Common myeloid progenitor, CD34-positive (primary cell): ENCODE measurements at regions of chr16 and their contacts with region 1.

Region 1: GRCh38 chr16:87778830-87779579 is 13.2 kb upstream of the KLHDC4 start:
- DNase-seq: peak; percentile 99 to 100 (median 99)
- H3K4me3 ChIP-seq: peak overlapping the region in 2 of 7 experiments; percentile 18 to 19
- H3K27ac ChIP-seq: peak overlapping the region; percentile 59 to 89
- H3K4me1 ChIP-seq: peaks cover 0 to 46% (median 32%) of the 10 kb centered on the region in 4 experiments
- H3K27me3 ChIP-seq: no peaks in the 10 kb centered on the region

Region 2: DNA sequence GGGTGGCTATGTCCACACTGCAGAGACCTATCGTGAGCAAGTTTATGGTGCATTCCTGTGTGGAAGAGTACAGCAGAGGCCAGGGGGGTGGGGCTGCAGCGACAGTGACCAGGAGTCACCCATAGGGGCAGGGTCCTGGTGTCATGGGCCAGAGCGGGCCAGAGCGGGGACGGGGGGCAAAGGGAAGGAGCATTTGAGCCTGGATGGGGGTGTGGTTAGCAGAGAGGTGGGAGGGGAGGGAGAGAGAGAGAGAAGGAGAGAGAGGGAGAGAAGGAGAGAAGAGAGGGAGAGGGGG is 158.9 kb before region 1 on chr16:
- CTCF ChIA-PET with region 1: no interaction called
- POLR2A ChIA-PET with region 1: no interaction called
- DNase-seq: no peak
- H3K4me3 ChIP-seq: no peak overlapping the region
- H3K27ac ChIP-seq: no peak overlapping the region
- H3K4me1 ChIP-seq: peaks cover 0 to 3% (median 0%) of the 10 kb centered on the region in 4 experiments
- H3K27me3 ChIP-seq: peaks cover 0 to 39% (median 3%) of the 10 kb centered on the region in 5 experiments

Region 3: GRCh38 chr16:87747626-87748414 is 31.2 kb before region 1 on chr16:
- CTCF ChIA-PET with region 1: no interaction called
- POLR2A ChIA-PET with region 1: no interaction called
- DNase-seq: no peak
- H3K4me3 ChIP-seq: no peak overlapping the region
- H3K27ac ChIP-seq: no peak overlapping the region
- H3K4me1 ChIP-seq: no peaks in the 10 kb centered on the region
- H3K27me3 ChIP-seq: no peaks in the 10 kb centered on the region

Region 4: DNA sequence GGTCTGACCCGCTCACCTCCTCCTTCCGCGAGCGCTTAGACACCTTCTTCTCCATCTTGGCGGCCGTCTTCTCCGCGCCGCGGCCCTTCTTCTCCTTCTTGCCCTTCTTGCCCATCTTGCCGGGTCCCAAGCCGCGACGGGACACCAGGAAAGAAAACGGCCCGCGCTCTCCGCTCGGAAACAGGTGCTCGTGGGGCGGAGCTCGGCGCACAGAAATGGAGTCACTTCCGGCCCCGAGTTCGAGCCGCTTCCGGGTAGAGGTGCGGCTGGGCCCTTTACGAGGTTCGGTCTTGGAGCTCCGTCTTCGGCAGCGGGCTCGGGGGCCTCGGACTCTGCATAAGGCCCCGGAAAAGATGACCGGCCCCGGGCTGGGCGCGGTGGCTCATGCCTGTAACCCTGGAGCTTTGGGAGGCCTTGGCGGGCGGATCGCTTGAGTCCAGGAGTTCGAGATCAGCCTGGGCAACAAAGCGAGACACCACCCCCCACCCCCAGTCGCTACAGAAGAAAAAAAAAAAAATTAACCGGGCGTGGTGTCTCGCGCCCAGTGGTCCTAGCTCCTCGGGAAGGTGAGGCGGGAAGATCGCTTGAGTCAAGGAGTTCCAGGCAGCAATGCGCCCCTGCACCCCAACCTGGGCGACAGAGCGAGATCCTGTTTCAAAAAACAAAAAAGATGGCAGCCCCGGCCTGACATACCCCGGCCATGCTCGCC is 13.1 kb before region 1 on chr16 and contains the start of gene KLHDC4:
- CTCF ChIA-PET with region 1: interaction called, 13 read pairs
- POLR2A ChIA-PET with region 1: no interaction called
- DNase-seq: peak; percentile 89 to 93 (median 93)
- H3K4me3 ChIP-seq: peak within 1 kb of the TSS; percentile 81 to 99 (median 93)
- H3K27ac ChIP-seq: peak within 1 kb of the TSS; percentile 74 to 94
- H3K4me1 ChIP-seq: peaks cover 4 to 21% (median 15%) of the 10 kb centered on the region in 4 experiments
- H3K27me3 ChIP-seq: no peaks in the 10 kb centered on the region

Region 5: DNA sequence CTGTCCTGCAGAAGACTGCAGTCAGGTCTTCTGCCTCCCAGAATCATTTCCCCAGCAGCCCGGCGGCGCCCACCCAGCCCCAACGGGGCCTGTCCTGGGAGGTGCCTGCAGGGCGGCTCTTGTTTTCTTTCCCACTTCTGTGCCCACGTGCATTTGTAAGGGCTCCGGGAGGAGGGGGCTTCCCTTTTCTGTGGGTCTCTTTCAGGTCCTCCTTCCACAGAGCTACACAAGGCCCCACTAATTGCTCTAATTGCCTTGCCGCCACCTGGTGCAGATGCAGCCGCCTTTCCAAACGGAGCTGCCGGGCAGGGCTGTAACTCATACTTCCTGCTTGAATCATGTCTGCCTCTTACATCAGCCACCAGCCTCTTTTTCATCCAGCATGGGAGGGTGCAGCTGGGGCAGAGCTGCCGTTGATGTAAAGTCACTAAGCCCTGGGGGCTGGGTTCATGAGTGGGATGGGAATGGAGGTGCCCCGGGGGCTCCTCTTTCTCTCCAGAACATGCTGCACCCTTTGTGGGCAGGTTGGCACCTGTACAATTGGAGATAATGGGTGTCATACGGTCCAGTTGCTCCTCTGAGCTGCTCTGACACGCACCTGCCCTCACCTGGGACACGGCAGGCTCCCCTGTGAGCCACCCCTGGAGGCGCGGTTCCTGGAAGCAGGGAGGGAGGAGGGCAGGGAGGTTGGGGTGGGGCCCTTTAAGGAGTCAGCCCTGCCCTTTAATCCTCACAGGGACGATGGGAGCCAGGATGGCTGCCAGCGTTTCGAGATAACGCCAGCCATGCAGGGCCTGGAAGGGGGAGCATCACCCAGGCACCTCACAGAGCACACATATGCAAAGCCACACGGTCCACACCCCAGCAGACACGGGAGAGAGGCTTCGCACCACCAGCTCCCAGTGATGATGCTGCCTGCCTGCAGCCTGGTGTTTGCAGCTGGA is 27.9 kb after region 1 on chr16:
- CTCF ChIA-PET with region 1: interaction called, 24 read pairs
- POLR2A ChIA-PET with region 1: interaction called, 9 read pairs
- DNase-seq: peak; percentile 66 to 90 (median 83)
- H3K4me3 ChIP-seq: peak overlapping the region in 2 of 7 experiments; percentile 2 to 15
- H3K27ac ChIP-seq: peak overlapping the region in 1 of 2 experiments; percentile 17
- H3K4me1 ChIP-seq: peaks cover 5 to 59% (median 30%) of the 10 kb centered on the region in 4 experiments
- H3K27me3 ChIP-seq: no peaks in the 10 kb centered on the region

Region 6: GRCh38 chr16:87853411-87854052 is 74.5 kb after region 1 on chr16:
- CTCF ChIA-PET with region 1: interaction called, 63 read pairs
- POLR2A ChIA-PET with region 1: interaction called, 11 read pairs
- DNase-seq: peak; percentile 86 to 95 (median 93)
- H3K4me3 ChIP-seq: peak overlapping the region in 5 of 7 experiments; percentile 21 to 65 (median 54)
- H3K27ac ChIP-seq: peak overlapping the region; percentile 50 to 82
- H3K4me1 ChIP-seq: peaks cover 0 to 62% (median 40%) of the 10 kb centered on the region in 4 experiments
- H3K27me3 ChIP-seq: no peaks in the 10 kb centered on the region

Region 7: DNA sequence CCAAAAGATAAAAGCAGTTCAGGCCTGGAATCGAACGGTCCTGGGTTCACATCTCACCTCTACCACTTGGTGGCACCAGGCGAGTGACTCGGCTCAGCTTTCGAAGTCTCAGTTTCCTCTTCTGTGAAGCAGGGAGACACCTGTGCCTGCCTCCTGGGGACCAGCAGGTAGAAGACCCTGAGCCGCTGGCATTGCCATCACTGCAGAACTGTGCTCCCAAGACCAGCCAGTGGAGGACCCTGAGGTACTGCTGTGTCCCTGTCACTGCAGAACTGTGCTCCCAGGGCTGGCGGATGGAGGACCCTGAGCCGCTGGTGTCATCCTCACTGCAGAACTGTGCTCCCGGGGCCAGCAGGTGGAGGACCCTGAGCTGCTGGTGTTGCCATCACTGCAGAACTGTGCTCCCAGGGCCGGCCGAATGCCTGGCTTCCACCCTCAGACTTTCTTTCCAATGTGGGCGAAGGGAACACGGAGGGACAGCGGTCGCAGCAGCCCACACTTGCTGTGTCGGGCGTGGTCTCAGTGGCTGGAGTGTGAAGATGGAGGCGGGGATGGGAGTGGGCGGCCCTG is 99.0 kb after region 1 on chr16:
- CTCF ChIA-PET with region 1: interaction called, 155 read pairs
- POLR2A ChIA-PET with region 1: interaction called, 8 read pairs
- DNase-seq: no peak
- H3K4me3 ChIP-seq: no peak overlapping the region
- H3K27ac ChIP-seq: no peak overlapping the region
- H3K4me1 ChIP-seq: peaks cover 0 to 18% (median under 1%) of the 10 kb centered on the region in 4 experiments
- H3K27me3 ChIP-seq: peaks cover 0 to 20% (median 3%) of the 10 kb centered on the region in 5 experiments

Region 8: DNA sequence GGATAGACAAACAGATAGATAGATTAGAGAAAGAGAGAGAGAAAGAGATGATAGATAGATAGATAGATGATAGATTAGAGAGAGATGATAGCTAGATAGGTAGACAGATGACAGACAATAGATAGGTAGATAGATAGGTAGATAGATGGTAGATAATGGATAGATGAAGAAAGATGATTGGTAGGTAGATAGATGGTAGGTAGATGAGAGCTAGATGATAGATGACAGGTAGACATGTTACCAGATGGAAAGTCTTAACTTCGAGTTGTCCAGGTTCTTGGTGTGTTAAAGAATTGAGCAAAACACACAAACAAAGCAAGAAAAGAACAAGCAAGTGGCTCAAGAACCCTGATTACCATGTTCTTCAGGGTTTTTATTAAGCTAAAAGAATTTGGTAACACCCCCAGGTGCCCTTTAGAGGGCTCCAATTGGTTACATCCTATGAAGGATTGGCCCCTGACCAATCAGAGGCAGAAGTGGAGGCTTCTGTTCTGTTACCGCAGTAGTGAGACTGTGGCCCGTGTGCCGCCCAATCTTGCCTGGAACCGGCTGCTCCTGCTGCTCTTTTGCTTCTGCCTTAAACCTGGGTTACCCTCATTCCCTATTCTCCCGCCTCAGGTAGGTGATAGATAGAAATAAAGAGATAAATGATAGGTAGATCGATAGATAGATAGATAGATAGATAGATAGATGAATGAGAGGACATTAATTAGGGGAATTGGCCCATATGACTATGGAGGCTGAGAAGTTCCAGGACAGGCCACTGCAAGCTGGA is 160.5 kb after region 1 on chr16:
- CTCF ChIA-PET with region 1: no interaction called
- POLR2A ChIA-PET with region 1: no interaction called
- DNase-seq: no peak
- H3K4me3 ChIP-seq: no peak overlapping the region
- H3K27ac ChIP-seq: no peak overlapping the region
- H3K4me1 ChIP-seq: peaks cover 0 to 8% (median 4%) of the 10 kb centered on the region in 4 experiments
- H3K27me3 ChIP-seq: no peaks in the 10 kb centered on the region